T-cell (primary cell): ENCODE measurements at regions of chr18 and their contacts with region 1.

Region 1: DNA sequence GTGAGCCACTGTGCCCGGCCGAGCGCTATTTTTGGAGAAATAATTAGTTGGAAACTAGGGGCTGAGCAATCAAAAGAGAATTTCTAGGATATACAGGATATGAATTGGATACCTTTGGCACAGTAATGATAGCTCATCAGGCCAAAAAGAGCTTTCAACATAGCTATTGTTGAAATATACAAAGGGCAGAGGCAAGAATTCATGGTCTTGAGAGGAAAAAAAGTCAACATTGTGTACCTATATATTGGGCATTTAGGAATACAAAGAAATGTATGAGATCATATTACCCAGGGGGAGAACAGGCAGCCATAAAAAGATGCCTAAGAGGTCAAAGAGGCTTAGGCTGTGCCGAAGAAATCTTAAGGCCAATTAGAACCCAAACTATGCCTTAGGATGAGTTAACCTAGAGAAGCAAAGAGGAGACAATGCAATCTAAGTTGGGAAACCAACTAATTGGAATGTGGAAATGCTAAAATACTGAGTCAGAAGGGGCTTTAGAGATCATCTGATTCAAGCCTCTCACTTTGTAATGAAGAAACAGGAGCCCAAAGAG is 99.0 kb downstream of the RBBP8 start:
- DNase-seq: no peak
- ATAC-seq: no peak
- H3K4me3 ChIP-seq: no peak overlapping the region
- H3K4me3 Mint-ChIP-seq: no peak overlapping the region
- H3K27ac ChIP-seq: no peak overlapping the region
- H3K27ac Mint-ChIP-seq: no peak overlapping the region
- H3K4me1 ChIP-seq: no peaks in the 10 kb centered on the region
- H3K4me1 Mint-ChIP-seq: no peaks in the 10 kb centered on the region
- H3K27me3 ChIP-seq: no peaks in the 10 kb centered on the region
- H3K27me3 Mint-ChIP-seq: no peaks in the 10 kb centered on the region

Region 2: DNA sequence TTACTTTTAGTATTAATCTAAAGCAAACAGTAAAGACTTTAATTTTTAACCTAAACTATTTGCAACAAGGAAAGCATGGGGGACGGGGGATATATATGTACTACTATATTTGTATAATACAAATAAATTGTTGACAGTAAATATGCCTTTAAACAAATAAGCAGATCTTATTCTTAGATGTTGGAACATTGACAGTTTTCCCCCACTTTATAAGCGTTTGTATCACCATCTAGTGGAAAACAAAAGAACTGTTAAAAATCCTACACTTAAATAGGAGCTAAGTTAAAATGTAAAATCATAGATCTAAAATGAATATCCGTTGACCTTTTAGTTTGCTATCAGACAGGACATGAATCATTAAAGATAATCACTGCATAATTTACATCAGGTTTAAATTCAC is 48.9 kb before region 1 on chr18:
- CTCF ChIA-PET with region 1: no interaction called
- POLR2A ChIA-PET with region 1: no interaction called
- DNase-seq: peak in 1 of 35 experiments; percentile 44
- ATAC-seq: no peak
- H3K4me3 ChIP-seq: no peak overlapping the region
- H3K4me3 Mint-ChIP-seq: no peak overlapping the region
- H3K27ac ChIP-seq: no peak overlapping the region
- H3K27ac Mint-ChIP-seq: no peak overlapping the region
- H3K4me1 ChIP-seq: no peaks in the 10 kb centered on the region
- H3K4me1 Mint-ChIP-seq: peaks cover 0 to 7% (median 5%) of the 10 kb centered on the region in 3 donors
- H3K27me3 ChIP-seq: no peaks in the 10 kb centered on the region
- H3K27me3 Mint-ChIP-seq: no peaks in the 10 kb centered on the region

Region 3: DNA sequence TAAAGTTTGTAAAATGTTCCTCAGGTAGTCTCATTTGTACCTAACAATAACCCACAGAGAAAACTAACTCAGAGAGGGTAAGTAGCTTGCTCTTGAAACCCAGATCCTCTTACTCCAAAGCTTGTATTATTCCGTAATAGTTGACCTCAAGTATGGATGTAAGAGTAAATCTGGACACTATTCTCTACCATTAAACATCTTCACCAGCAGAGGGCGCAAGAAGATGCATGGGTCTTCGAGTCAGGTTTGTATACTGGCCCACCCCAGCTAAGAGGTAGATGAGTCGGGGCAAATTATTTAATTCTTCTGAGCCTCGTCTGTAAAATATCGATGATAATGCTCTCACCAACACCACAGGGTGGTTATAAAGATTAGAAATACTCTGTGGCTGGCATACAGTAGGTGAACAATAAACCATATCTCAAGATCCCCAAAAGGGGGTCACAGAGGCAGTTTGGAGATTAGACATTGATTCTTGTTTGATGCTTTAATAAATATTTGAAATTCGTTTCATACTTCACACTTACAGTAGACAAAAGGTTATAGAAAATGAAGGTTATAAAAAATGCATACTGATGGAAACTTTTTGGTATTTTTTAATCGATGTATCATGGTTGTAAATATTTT is 99.7 kb after region 1 on chr18:
- CTCF ChIA-PET with region 1: interaction called, 4 to 13 read pairs
- POLR2A ChIA-PET with region 1: interaction called in 1 of 2 experiments, 3 read pairs
- DNase-seq: peak in 28 of 35 experiments; percentile 9 to 86 (median 44)
- ATAC-seq: peak in 1 of 4 experiments; percentile 41
- H3K4me3 ChIP-seq: no peak overlapping the region
- H3K4me3 Mint-ChIP-seq: no peak overlapping the region
- H3K27ac ChIP-seq: no peak overlapping the region
- H3K27ac Mint-ChIP-seq: no peak overlapping the region
- H3K4me1 ChIP-seq: peaks cover 7 to 20% of the 10 kb centered on the region in 2 experiments
- H3K4me1 Mint-ChIP-seq: peaks cover 8 to 17% (median 8%) of the 10 kb centered on the region in 3 donors
- H3K27me3 ChIP-seq: peaks cover 4 to 38% of the 10 kb centered on the region in 2 experiments
- H3K27me3 Mint-ChIP-seq: peaks cover 20 to 36% of the 10 kb centered on the region in 2 donors

Region 4: GRCh38 chr18:23365602-23366001 is 333.5 kb after region 1 on chr18:
- CTCF ChIA-PET with region 1: interaction called, 3 to 11 read pairs
- POLR2A ChIA-PET with region 1: no interaction called
- DNase-seq: no peak
- ATAC-seq: no peak
- H3K4me3 ChIP-seq: no peak overlapping the region
- H3K4me3 Mint-ChIP-seq: no peak overlapping the region
- H3K27ac ChIP-seq: no peak overlapping the region
- H3K27ac Mint-ChIP-seq: no peak overlapping the region
- H3K4me1 ChIP-seq: no peaks in the 10 kb centered on the region
- H3K4me1 Mint-ChIP-seq: no peaks in the 10 kb centered on the region
- H3K27me3 ChIP-seq: no peaks in the 10 kb centered on the region
- H3K27me3 Mint-ChIP-seq: no peaks in the 10 kb centered on the region

Region 5: DNA sequence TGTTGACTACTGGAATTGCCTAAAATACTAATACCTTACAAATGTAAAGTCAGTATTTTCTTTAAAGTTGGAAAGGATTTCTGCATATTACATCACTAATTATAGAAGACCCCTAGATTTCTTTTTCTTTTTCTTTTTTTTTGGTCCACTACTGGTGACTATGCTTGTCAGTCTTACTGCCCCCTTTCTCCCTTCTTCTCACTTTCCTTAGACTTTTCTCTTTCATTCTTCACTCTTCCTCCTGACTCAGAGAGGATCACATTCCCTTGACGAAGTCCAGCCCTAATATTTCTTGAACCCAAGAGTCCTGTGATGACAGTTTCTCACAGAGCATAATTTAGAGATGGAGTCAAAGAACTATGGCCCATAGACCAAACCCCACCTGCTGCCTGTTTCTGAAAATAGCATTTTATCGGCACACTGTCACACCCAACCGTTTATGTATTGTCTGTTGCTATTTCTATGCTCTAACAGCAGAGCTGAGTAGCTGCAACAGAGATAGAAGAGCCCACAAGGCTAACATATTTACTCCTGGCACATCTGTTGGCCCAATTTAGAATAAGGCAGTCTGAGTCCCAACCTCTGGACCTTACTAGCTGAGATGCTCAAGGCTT is 380.4 kb after region 1 on chr18:
- CTCF ChIA-PET with region 1: interaction called, 13 to 27 read pairs
- POLR2A ChIA-PET with region 1: no interaction called
- DNase-seq: no peak
- ATAC-seq: no peak
- H3K4me3 ChIP-seq: no peak overlapping the region
- H3K4me3 Mint-ChIP-seq: no peak overlapping the region
- H3K27ac ChIP-seq: no peak overlapping the region
- H3K27ac Mint-ChIP-seq: no peak overlapping the region
- H3K4me1 ChIP-seq: no peaks in the 10 kb centered on the region
- H3K4me1 Mint-ChIP-seq: no peaks in the 10 kb centered on the region
- H3K27me3 ChIP-seq: no peaks in the 10 kb centered on the region
- H3K27me3 Mint-ChIP-seq: no peaks in the 10 kb centered on the region